ENCODE measurements at regions of chr17 and their contacts with region 1.

Region 1: DNA sequence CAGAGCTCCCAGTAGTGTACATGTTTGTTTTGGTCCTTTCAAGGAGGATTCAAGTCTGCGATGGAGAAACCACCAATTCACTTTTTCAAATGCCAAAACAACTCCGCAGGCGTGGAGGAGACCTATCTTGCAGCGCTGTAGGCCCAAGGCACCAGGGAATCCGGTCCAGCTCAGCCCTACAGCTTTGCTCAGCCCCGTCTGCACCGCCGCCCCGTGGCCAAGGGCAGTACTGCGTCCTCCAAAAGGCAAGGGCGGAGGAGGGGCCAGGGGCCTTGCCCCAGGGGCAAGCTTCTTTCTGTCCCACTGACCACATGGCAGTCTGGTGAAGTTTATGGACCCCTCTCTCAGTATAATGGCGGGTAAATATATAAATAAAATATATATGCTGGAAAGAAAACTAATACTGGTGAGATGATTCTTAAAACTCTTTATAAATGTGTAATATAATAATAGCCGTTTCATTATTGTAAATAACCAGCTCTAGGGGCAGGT is 709 bp upstream of the CD300LG start:
- DNase-seq: peak; percentile 98
- ATAC-seq: peak; percentile 97
- H3K4me3 Mint-ChIP-seq: no peak overlapping the region
- H3K27ac Mint-ChIP-seq: no peak overlapping the region
- H3K4me1 Mint-ChIP-seq: peaks cover 16% of the 10 kb centered on the region
- H3K27me3 Mint-ChIP-seq: peaks cover 5% of the 10 kb centered on the region
- CTCF ChIP-seq: peak; percentile 95

Region 2: GRCh38 chr17:43645765-43646481 is 200.3 kb before region 1 on chr17:
- CTCF ChIA-PET with region 1: no interaction called
- POLR2A ChIA-PET with region 1: no interaction called
- DNase-seq: peak; percentile 60
- ATAC-seq: peak; percentile 75
- H3K4me3 Mint-ChIP-seq: peak overlapping the region; percentile 62
- H3K27ac Mint-ChIP-seq: no peak overlapping the region
- H3K4me1 Mint-ChIP-seq: peaks cover 9% of the 10 kb centered on the region
- H3K27me3 Mint-ChIP-seq: peaks cover 10% of the 10 kb centered on the region
- CTCF ChIP-seq: no peak

Region 3: GRCh38 chr17:43766413-43767052 is 79.7 kb before region 1 on chr17:
- CTCF ChIA-PET with region 1: interaction called, 41 read pairs
- POLR2A ChIA-PET with region 1: no interaction called
- DNase-seq: peak; percentile 86
- ATAC-seq: peak; percentile 50
- H3K4me3 Mint-ChIP-seq: no peak overlapping the region
- H3K27ac Mint-ChIP-seq: no peak overlapping the region
- H3K4me1 Mint-ChIP-seq: peaks cover 9% of the 10 kb centered on the region
- H3K27me3 Mint-ChIP-seq: no peaks in the 10 kb centered on the region
- CTCF ChIP-seq: peak; percentile 82

Region 4: DNA sequence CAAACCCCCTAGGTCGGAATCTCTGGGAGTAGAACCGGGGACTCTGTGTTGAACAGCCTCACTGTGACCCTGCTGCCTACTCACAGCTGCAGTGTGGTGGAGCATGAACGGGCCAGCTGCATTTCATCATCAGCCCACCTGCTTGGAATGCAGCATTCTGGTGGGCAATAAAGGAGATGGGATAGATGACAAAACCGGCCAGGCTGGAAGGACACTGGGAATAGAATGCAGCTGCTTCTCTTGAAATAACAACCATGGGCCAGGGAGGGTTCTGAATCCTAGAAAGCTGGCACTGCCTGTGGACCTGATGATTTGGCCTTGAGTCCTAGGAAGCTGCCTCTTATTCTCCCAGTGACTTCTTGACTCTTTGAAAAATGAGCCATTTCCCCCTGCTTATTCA is 42.5 kb before region 1 on chr17:
- CTCF ChIA-PET with region 1: interaction called, 17 read pairs
- POLR2A ChIA-PET with region 1: interaction called, 3 read pairs
- DNase-seq: peak; percentile 39
- ATAC-seq: peak; percentile 90
- H3K4me3 Mint-ChIP-seq: 0 out of 2 replicates have a peak overlapping the region, but pooled peaks have one; percentile 2
- H3K27ac Mint-ChIP-seq: peak overlapping the region; percentile 82
- H3K4me1 Mint-ChIP-seq: peaks cover 43% of the 10 kb centered on the region
- H3K27me3 Mint-ChIP-seq: no peaks in the 10 kb centered on the region
- CTCF ChIP-seq: no peak

Region 5: GRCh38 chr17:43832976-43833829 is 13.1 kb before region 1 on chr17 and contains the start of gene MPP3:
- CTCF ChIA-PET with region 1: interaction called, 45 read pairs
- POLR2A ChIA-PET with region 1: no interaction called
- DNase-seq: peak; percentile 53
- ATAC-seq: peak; percentile 82
- H3K4me3 Mint-ChIP-seq: peak within 1 kb of the TSS; percentile 86
- H3K27ac Mint-ChIP-seq: no peak within 1 kb of the TSS; the same call in 1 of the 2 replicates
- H3K4me1 Mint-ChIP-seq: peaks cover 26% of the 10 kb centered on the region
- H3K27me3 Mint-ChIP-seq: peaks cover 36% of the 10 kb centered on the region
- CTCF ChIP-seq: no peak
- total RNA-seq, gene MPP3: 9.2 to 11.3 TPM (median 10.3 TPM) in 3 replicates

Region 6: DNA sequence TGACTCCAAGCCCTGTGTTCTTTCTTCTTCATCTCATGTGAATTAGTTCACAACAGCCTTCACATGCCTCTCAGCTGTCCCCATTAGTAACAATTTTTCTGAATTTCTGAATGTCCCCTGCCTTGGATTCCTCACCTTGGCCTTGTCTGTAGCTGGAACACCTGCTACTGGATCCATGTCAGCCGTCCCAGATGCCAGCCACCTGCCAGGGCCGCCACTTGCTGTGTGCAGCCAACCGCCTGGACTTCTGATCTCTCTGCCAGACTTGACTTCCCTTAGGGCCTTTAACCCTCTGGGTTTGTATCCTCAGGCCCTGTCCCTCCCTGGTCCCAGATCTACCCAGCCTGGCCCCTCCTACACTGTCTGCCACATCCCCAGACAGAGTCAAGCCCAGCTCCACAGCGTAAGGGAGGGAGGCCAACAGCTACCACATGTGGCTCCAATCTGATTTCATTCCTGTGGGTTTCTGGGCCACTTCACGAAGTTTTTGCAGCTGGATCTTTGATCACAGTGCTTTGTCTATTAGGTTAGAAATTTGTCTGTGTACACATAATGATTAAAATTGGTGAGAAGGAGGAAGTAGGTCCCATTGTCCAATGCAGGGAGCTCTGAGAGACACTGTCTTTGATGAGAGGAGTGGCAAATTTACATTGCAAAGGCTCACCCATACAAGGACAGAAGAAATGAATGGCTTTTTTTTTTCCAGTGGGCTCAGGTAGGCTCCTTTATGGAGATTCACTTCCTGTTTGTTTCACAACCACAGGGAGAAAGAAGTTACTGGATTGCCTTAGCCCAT is 45.8 kb after region 1 on chr17:
- CTCF ChIA-PET with region 1: interaction called, 12 read pairs
- POLR2A ChIA-PET with region 1: no interaction called
- DNase-seq: peak; percentile 33
- ATAC-seq: peak; percentile 93
- H3K4me3 Mint-ChIP-seq: peak overlapping the region; percentile 37
- H3K27ac Mint-ChIP-seq: peak overlapping the region; percentile 94
- H3K4me1 Mint-ChIP-seq: peaks cover 34% of the 10 kb centered on the region
- H3K27me3 Mint-ChIP-seq: no peaks in the 10 kb centered on the region
- CTCF ChIP-seq: no peak

Region 7: DNA sequence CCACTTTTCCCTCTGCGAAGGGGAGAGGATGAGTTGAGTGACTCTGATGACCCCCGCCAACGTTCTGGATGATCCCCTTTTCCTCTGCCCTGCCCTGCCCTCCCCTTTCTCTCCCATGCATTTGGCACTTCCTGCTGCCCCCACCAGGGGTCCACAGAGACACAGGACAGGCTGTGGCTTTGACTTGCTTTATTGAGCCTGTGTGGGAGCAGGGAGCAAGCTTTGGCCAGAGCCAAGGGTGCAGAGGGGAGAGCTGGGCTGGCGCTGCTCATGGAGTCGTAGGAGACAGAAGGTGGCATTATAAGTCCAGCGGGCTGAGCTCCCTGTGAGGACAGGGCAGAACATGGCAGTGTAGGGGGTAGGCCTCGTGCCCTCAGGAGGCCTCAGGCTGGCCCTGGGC is 94.4 kb after region 1 on chr17:
- CTCF ChIA-PET with region 1: interaction called, 16 read pairs
- POLR2A ChIA-PET with region 1: no interaction called
- DNase-seq: peak; percentile 77
- ATAC-seq: peak; percentile 74
- H3K4me3 Mint-ChIP-seq: no peak overlapping the region
- H3K27ac Mint-ChIP-seq: no peak overlapping the region
- H3K4me1 Mint-ChIP-seq: peaks cover 20% of the 10 kb centered on the region
- H3K27me3 Mint-ChIP-seq: peaks cover 46% of the 10 kb centered on the region
- CTCF ChIP-seq: peak; percentile 56

Region 8: DNA sequence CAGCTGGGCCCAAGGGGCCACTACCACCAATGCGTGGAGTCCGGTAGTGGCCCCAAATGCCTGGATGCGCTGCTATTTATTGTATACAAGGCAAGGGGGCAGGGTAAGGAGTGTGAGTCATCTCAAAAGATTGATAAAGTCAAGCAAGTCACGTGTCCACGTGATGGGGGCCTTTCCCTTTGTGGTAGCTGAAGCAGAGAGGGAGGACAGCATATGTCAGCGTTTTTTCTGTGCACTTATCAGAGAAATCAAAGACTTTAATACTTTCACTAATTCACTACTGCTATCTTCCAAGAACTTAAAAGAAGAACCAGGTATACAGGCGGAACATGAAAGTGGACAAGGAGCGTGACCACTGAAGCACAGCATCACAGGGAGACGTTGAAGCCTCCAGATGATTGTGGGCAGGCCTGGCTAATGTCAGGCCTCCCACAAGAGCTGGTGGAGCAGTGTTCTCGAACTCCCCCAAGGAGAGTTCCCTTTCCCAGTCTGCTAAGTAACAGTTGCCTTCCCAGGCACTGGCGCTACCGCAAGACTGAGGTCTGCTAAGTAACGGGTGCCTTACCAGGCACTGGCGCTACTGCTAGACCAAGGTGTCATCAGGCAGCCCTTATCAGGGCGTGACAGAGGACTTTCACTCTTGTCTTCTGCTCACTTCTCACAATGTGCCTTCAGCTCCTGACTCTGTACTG is 313.4 kb after region 1 on chr17:
- CTCF ChIA-PET with region 1: no interaction called
- POLR2A ChIA-PET with region 1: no interaction called
- DNase-seq: no peak
- ATAC-seq: no peak
- H3K4me3 Mint-ChIP-seq: no peak overlapping the region
- H3K27ac Mint-ChIP-seq: no peak overlapping the region
- H3K4me1 Mint-ChIP-seq: no peaks in the 10 kb centered on the region
- H3K27me3 Mint-ChIP-seq: no peaks in the 10 kb centered on the region
- CTCF ChIP-seq: no peak